ENCODE measurements at regions of chr4 and their contacts with region 1.

Region 1: DNA sequence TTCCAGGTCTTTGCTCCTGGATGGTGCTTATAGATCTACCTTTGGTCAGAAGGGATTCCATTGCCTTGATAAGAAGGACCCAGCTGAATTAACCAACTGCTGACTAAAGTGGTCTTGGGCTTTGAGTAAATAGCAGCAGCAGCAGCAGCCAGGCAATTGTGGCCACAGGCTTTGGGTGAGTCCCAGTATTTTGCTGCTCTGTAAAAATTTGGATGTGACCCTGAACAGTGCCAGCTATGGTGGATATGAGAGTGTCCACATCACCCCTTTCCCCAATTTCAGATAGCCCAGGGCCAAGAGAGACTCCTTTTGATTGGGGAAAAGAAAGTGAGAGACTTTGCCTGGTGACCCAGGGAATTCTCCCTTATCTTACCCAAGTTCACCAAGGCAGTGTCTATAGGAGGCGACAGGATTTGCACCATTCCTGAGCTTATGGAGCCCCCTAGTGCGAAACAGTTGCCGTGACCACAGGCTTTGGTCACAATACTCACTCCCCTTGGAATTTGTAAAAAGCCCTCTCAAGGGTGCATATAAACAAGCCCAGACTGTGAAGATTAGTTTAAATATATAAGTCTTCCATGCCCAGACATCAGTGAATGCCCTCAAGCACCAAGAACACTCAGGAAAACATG is 518.0 kb downstream of the TMA16 start:
- DNase-seq: peak; percentile 82
- H3K4me3 ChIP-seq: no peak overlapping the region
- H3K27ac ChIP-seq: peak overlapping the region; percentile 8
- H3K4me1 ChIP-seq: peaks cover 7% of the 10 kb centered on the region
- H3K27me3 ChIP-seq: no peaks in the 10 kb centered on the region
- CTCF ChIP-seq: peak; percentile 82

Region 2: GRCh38 chr4:163494360-163495162 is 518.0 kb before region 1 on chr4 and contains the start of gene TMA16:
- CTCF ChIA-PET with region 1: no interaction called
- POLR2A ChIA-PET with region 1: no interaction called
- intact Hi-C with region 1: loop called (anchors 5 kb)
- DNase-seq: peak; percentile 97
- H3K4me3 ChIP-seq: peak within 1 kb of the TSS; percentile 90
- H3K27ac ChIP-seq: peak within 1 kb of the TSS; percentile 98
- H3K4me1 ChIP-seq: peaks cover 3% of the 10 kb centered on the region
- H3K27me3 ChIP-seq: no peaks in the 10 kb centered on the region
- CTCF ChIP-seq: no peak
- total RNA-seq, gene TMA16: 83.5 and 84.8 TPM in 2 replicates

Region 3: DNA sequence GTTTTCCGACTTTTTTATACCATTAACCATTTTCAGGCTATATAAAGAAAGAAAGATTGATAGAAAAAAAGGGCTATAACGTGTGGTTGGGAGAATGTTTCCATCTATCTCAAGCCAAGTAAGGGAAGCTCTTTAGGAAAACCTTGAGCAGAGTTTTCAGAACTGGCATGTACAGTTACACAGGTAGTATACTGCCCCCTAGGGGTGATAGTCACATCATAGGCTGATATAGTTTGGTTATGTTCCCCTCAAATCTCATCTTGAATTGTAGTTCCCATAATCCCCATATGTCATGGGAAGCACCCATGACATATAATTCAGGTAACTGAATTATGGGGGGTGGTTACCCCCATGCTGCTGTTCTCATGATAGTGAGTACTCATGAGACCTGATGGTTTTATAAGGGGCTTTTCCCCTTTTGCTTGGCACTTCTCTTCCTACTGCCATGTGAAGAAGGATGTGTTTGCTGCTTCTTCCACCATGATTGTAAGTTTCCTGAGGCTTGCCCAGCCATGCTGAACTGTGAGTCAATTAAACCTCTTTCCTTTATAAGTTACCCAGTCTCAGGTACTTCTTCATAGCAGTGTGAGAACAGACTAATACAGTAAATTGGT is 331.2 kb before region 1 on chr4:
- CTCF ChIA-PET with region 1: no interaction called
- POLR2A ChIA-PET with region 1: no interaction called
- intact Hi-C with region 1: loop called (anchors 2 kb)
- DNase-seq: peak; percentile 70
- H3K4me3 ChIP-seq: no peak overlapping the region
- H3K27ac ChIP-seq: no peak overlapping the region
- H3K4me1 ChIP-seq: no peaks in the 10 kb centered on the region
- H3K27me3 ChIP-seq: no peaks in the 10 kb centered on the region
- CTCF ChIP-seq: peak; percentile 69

Region 4: DNA sequence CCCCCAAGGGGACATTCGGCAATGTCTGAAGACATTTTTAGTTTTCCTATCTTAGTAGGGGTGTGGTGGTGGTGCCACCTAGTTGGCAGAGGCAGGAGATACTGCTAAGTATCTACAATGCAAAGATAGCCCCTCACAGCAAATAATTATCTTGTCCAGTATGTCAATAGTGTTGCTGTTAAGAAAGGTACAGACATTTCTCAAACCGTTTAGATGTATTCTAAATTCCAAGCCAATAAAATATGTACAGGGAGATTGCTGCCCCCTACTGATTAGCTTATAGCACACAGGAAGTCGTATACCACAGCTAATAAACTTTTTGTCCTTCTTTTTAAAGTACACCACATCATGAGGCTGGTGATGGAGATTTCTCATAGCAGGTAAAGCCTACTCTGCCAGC is 257.5 kb before region 1 on chr4:
- CTCF ChIA-PET with region 1: no interaction called
- POLR2A ChIA-PET with region 1: no interaction called
- intact Hi-C with region 1: loop called (anchors 2 kb)
- DNase-seq: peak; percentile 81
- H3K4me3 ChIP-seq: no peak overlapping the region
- H3K27ac ChIP-seq: no peak overlapping the region
- H3K4me1 ChIP-seq: peaks cover 11% of the 10 kb centered on the region
- H3K27me3 ChIP-seq: no peaks in the 10 kb centered on the region
- CTCF ChIP-seq: peak; percentile 70

Region 5: GRCh38 chr4:164383358-164384220 is 371.1 kb after region 1 on chr4:
- CTCF ChIA-PET with region 1: no interaction called
- POLR2A ChIA-PET with region 1: no interaction called
- intact Hi-C with region 1: no loop called
- DNase-seq: peak; percentile 89
- H3K4me3 ChIP-seq: peak overlapping the region; percentile 75
- H3K27ac ChIP-seq: peak overlapping the region; percentile 59
- H3K4me1 ChIP-seq: peaks cover 4% of the 10 kb centered on the region
- H3K27me3 ChIP-seq: no peaks in the 10 kb centered on the region
- CTCF ChIP-seq: peak; percentile 55

Region 6: DNA sequence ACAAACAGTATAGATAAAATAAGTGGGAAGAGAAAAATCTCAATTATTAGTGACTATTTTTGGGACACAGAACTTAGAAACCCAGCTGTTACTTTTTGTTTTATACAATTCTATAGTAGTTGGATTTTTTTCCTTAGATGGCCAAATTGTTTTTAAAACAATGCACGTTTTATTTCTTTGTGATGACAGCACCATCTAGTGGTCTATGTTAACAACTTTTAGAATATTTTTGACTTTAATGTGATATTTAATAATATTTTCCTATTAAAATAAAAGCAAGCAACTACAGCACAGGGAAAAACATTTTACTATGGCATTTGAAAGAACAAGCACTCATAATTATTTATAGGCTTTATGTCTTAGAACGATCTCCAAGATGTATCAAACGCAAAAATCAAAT is 735.9 kb after region 1 on chr4:
- CTCF ChIA-PET with region 1: no interaction called
- POLR2A ChIA-PET with region 1: no interaction called
- intact Hi-C with region 1: loop called (anchors 5 kb)
- DNase-seq: peak; percentile 64
- H3K4me3 ChIP-seq: no peak overlapping the region
- H3K27ac ChIP-seq: no peak overlapping the region
- H3K4me1 ChIP-seq: peaks cover 18% of the 10 kb centered on the region
- H3K27me3 ChIP-seq: no peaks in the 10 kb centered on the region
- CTCF ChIP-seq: peak; percentile 61

Region 7: GRCh38 chr4:165096776-165097175 is 1084.3 kb after region 1 on chr4:
- CTCF ChIA-PET with region 1: no interaction called
- POLR2A ChIA-PET with region 1: interaction called, 10 read pairs
- intact Hi-C with region 1: loop called (anchors 10 kb)
- DNase-seq: peak; percentile 52
- H3K4me3 ChIP-seq: no peak overlapping the region
- H3K27ac ChIP-seq: no peak overlapping the region
- H3K4me1 ChIP-seq: no peaks in the 10 kb centered on the region
- H3K27me3 ChIP-seq: no peaks in the 10 kb centered on the region
- CTCF ChIP-seq: peak; percentile 71